Natural killer cell (primary cell): ENCODE measurements at regions of chr17 and their contacts with region 1.

Region 1: DNA sequence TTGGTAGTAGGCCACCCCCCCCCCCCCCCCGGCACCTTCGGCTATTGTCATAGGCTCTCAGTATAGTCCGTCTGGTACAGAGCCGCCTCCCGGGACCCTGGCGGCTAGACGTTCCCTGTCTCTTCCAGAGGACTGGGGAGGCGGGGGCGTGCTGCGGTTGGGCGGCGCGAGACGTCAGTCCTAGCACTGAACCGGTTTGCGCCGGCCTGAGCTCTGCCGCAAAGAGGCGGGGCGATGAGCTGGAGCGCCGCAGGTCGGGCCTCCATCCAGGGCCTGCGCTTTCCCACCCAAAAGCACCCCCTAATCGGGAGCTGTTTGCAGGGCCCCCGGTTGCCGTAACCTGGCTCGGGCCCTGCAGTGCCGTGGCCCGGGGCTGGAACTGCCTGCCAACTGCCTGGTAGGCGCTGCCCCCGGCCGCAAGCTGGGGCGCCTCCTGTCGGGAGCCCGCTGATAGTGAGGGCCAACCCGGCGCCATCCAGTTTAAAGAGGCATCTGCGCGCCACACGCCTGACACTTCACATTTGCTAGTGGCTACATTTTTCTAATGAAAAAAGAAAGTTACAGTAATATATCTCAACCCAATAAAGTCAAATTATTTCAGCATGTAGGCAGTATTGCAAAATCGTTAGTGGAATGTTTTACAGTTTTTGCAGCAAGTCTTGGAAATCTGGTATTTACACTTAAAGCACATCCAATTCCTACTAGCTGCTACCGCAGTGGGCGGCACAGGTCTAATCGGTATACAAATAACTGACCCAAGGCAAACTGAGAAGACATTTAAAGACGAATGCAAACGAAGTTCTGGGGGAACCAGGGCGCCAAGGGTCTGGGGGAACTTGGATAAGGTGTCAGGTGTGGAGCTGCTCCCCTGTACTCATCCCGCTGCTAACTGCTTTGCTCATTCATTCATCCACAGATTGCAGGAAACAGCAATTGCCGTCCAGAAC is 748 bp upstream of the USP22 start:
- DNase-seq: peak in 1 of 2 donors; percentile 94
- ATAC-seq: peak; percentile 70 to 90 (median 80)
- H3K4me3 ChIP-seq: peak overlapping the region; percentile 90
- H3K4me3 Mint-ChIP-seq: peak overlapping the region; percentile 88
- H3K27ac ChIP-seq: peak overlapping the region; percentile 100
- H3K27ac Mint-ChIP-seq: peak overlapping the region; percentile 91 to 93
- H3K4me1 ChIP-seq: peaks cover 30% of the 10 kb centered on the region
- H3K4me1 Mint-ChIP-seq: peaks cover 16 to 27% of the 10 kb centered on the region in 2 donors
- H3K27me3 ChIP-seq: no peaks in the 10 kb centered on the region
- H3K27me3 Mint-ChIP-seq: peaks cover 4 to 5% of the 10 kb centered on the region in 2 donors
- CTCF ChIP-seq: peak; percentile 89

Region 2: DNA sequence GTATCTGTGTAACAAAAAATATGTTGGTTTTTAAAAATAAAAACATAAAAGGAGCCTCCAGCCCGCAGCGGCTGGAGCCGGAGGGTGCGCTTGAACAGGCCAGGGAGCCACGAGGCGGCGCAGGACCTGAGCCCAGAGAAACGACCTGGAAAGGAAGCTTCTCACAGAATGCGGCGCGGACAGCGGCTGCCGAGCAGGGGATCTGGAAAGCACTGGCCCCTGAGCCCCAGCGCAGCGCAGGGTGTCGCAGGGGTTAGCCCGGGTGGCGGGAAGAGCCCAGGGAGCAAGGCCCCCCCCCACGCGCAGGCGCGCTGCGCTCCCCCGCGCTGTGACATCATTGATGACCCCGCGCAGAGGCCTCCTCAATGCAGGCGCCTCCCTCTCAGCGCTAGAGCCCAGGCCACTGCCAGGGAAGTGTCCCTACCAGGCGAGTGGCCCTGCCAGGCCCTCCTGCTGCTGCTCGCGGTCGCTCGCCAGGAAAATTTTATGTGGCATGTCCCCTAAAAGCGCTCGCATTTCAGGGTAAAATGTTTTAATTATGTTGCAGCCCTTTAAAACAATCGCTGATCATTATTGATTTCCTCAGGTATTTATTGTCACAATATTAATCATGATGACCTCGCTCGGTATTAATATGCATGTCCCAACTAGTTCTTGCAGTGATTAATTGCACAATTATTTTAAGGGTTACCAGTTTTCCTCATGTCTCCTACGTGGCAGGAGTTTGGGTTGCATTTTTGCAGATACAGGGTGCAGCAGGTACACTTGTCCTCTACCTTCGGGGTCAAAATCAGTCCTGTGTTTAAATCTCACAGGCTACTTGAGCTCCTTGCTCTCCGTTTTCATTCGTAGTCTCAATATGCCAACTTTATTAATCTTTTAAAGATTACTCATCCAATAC is 134.9 kb before region 1 on chr17:
- intact Hi-C with region 1: loop called (anchors 10 kb)
- DNase-seq: peak; percentile 78 to 85
- ATAC-seq: peak; percentile 97 to 99 (median 99)
- H3K4me3 ChIP-seq: peak overlapping the region; percentile 54
- H3K4me3 Mint-ChIP-seq: peak overlapping the region; percentile 87
- H3K27ac ChIP-seq: peak overlapping the region; percentile 49
- H3K27ac Mint-ChIP-seq: peak overlapping the region; percentile 42 to 67
- H3K4me1 ChIP-seq: peaks cover 11% of the 10 kb centered on the region
- H3K4me1 Mint-ChIP-seq: peaks cover 0 to 7% of the 10 kb centered on the region in 2 donors
- H3K27me3 ChIP-seq: no peaks in the 10 kb centered on the region
- H3K27me3 Mint-ChIP-seq: peaks cover 4 to 28% of the 10 kb centered on the region in 2 donors
- CTCF ChIP-seq: peak; percentile 47

Region 3: DNA sequence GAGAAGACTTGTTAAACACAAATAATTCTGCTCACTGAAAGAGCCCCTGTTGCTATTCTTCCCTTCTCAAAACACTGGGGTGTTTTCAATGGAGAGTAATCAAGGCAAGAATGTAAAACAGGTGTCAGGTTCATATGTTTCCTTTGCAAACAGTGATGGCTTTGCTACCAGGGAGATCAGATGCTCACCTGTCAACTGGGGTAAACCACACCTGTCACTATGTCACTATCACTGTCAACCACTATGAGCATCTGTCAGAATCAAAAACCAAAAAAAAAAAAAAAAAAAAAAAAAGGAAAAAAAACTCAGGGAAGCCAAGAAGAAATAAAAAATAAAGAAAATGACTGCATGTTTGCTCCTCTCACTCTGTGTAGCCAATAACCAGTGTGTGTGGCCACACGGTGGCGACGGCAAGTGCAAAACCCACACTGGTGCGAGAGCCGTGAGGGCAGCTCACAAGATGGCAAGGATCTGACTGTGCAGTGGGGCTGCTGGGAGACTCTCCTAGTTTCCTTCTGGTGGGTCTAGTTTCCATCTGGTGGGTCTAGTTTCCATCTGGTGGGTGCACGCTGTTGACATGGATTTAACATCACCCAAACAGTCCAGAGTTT is 23.5 kb before region 1 on chr17:
- intact Hi-C with region 1: loop called (anchors 1 kb)
- DNase-seq: peak; percentile 61 to 66
- ATAC-seq: peak; percentile 89 to 97 (median 95)
- H3K4me3 ChIP-seq: no peak overlapping the region
- H3K4me3 Mint-ChIP-seq: no peak overlapping the region
- H3K27ac ChIP-seq: no peak overlapping the region
- H3K27ac Mint-ChIP-seq: peak overlapping the region; percentile 56 to 60
- H3K4me1 ChIP-seq: peaks cover 12% of the 10 kb centered on the region
- H3K4me1 Mint-ChIP-seq: peaks cover 32 to 36% of the 10 kb centered on the region in 2 donors
- H3K27me3 ChIP-seq: no peaks in the 10 kb centered on the region
- H3K27me3 Mint-ChIP-seq: no peaks in the 10 kb centered on the region
- CTCF ChIP-seq: peak; percentile 57

Region 4: DNA sequence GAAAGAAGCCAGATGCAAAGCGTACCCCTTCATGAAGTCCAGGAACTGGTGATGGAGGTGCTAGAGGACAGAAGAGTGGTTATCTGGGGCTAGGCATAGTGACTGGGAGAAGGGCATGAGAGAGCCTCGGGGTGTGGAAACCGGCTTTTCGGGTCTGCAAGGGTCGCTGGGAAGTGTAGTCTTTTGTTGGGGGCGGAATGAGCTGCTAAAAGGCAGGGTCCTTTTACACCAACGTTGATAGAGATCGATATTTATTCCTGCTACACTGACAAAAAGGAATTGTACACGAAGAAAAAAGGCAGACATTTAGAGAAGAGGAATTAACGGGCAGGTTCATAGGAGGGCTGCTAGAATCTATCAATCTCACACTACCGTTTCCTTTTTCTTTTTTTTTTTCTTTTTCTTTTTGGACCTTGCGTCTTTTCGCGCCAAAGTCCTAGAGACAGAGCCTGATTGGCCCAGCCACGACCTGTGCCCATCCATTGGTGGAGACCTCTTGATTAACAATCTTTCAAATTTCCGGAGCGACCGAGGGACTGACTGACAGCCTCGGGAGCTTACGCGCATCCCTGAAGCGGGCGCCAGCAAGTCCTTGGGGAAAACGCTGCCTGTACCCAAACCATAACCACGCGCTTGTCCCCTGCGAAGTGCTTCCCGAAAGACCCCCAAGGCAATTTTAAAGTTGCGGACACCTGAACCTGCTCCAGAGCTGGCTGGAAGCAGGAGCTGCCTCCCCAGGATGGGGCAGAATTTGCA is 55.6 kb after region 1 on chr17:
- intact Hi-C with region 1: loop called (anchors 5 kb)
- DNase-seq: peak; percentile 43 to 86
- ATAC-seq: peak; percentile 87 to 95 (median 91)
- H3K4me3 ChIP-seq: peak overlapping the region; percentile 58
- H3K4me3 Mint-ChIP-seq: peak overlapping the region; percentile 87
- H3K27ac ChIP-seq: no peak overlapping the region
- H3K27ac Mint-ChIP-seq: peak overlapping the region; percentile 36 to 39
- H3K4me1 ChIP-seq: peaks cover 17% of the 10 kb centered on the region
- H3K4me1 Mint-ChIP-seq: peaks cover 13 to 14% of the 10 kb centered on the region in 2 donors
- H3K27me3 ChIP-seq: no peaks in the 10 kb centered on the region
- H3K27me3 Mint-ChIP-seq: peaks cover 0 to 3% of the 10 kb centered on the region in 2 donors
- CTCF ChIP-seq: no peak